Psoas muscle (tissue), 8 donors: ENCODE measurements at regions of chr3 and their contacts with region 1.

Region 1: DNA sequence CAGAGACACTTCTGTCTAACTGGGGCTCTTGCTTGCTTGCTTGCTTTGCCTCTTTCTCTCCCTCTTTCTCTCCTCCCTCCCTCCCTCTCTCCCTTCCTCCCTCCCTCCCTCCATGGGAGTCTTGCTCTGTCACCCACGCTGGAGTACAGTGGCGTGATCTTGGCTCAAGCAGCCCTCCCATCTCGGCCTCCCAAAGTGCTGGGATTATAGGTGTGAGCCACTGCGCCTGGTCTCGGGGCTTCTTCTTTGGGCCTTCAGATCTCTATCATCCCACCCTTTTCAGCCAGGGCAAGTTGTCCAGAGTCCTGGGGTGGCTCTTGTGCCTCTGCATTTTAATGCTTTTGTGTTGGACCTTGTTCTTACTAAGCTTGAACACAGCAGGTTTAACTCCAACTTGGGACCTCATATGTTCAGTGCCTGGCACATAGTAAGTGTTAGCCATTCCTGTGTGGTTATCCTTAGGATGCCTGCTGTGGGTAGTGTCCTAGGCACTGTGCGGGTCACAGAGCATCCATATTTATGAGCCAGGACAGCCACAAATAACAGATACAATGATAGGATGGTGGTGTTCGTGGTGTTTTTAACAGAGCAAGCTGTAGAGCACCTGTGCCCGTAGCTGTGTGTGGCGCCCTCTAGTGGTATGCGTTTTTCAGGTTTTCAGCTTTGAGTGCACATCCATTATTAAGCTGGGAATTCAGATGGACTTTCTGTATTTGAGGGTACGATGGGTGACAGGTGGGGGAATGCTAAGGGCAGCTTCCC is 75.1 kb downstream of the CCK start:
- DNase-seq: peak in 1 of 2 donors; percentile 42
- ATAC-seq: peak; percentile 67 to 85 (median 74)
- H3K4me3 ChIP-seq: no peak overlapping the region
- H3K27ac ChIP-seq: no peak overlapping the region
- H3K4me1 ChIP-seq: peaks cover 14% of the 10 kb centered on the region
- H3K27me3 ChIP-seq: no peaks in the 10 kb centered on the region
- CTCF ChIP-seq: peak; percentile 86

Region 2: GRCh38 chr3:41893977-41894376 is 296.9 kb before region 1 on chr3:
- intact Hi-C with region 1: loop called in 1 of 2 experiments (anchors 10 kb)
- DNase-seq: no peak
- ATAC-seq: peak in 1 of 4 donors; percentile 59
- H3K4me3 ChIP-seq: no peak overlapping the region
- H3K27ac ChIP-seq: no peak overlapping the region
- H3K4me1 ChIP-seq: no peaks in the 10 kb centered on the region
- H3K27me3 ChIP-seq: no peaks in the 10 kb centered on the region
- CTCF ChIP-seq: peak; percentile 60

Region 3: DNA sequence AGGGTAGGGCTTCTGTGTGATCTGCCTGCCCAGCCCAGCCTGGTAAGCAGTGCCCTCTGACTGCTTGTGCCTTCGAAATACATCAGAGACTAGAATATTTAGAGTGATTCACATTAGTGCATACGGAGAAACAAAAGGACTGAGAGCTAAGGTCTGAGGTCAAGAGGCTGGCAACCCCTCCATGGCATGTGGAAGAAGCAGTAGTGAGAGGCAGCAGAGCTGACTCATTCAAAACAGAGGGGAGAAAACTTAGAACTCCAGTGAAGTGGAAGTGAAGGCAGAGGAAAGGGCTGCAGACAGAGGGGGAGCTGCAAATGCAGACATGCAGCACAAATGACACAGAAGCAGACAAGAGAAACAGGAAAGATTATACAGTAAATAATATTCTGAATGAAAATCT is 290.6 kb before region 1 on chr3:
- intact Hi-C with region 1: loop called (anchors 5 to 10 kb)
- DNase-seq: no peak
- ATAC-seq: no peak
- H3K4me3 ChIP-seq: no peak overlapping the region
- H3K27ac ChIP-seq: no peak overlapping the region
- H3K4me1 ChIP-seq: no peaks in the 10 kb centered on the region
- H3K27me3 ChIP-seq: no peaks in the 10 kb centered on the region
- CTCF ChIP-seq: no peak

Region 4: GRCh38 chr3:42024591-42025351 is 166.1 kb before region 1 on chr3:
- intact Hi-C with region 1: loop called (anchors 5 to 10 kb)
- DNase-seq: no peak
- ATAC-seq: peak in 2 of 4 donors; percentile 31 to 37
- H3K4me3 ChIP-seq: peak overlapping the region; percentile 31
- H3K27ac ChIP-seq: peak overlapping the region; percentile 85
- H3K4me1 ChIP-seq: peaks cover 76% of the 10 kb centered on the region
- H3K27me3 ChIP-seq: no peaks in the 10 kb centered on the region
- CTCF ChIP-seq: no peak

Region 5: GRCh38 chr3:42118762-42119361 is 72.0 kb before region 1 on chr3:
- intact Hi-C with region 1: loop called (anchors 2 kb)
- DNase-seq: peak in 1 of 2 donors; percentile 72
- ATAC-seq: peak; percentile 60 to 73 (median 64)
- H3K4me3 ChIP-seq: no peak overlapping the region
- H3K27ac ChIP-seq: peak overlapping the region; percentile 48
- H3K4me1 ChIP-seq: peaks cover 77% of the 10 kb centered on the region
- H3K27me3 ChIP-seq: no peaks in the 10 kb centered on the region
- CTCF ChIP-seq: peak; percentile 53

Region 6: DNA sequence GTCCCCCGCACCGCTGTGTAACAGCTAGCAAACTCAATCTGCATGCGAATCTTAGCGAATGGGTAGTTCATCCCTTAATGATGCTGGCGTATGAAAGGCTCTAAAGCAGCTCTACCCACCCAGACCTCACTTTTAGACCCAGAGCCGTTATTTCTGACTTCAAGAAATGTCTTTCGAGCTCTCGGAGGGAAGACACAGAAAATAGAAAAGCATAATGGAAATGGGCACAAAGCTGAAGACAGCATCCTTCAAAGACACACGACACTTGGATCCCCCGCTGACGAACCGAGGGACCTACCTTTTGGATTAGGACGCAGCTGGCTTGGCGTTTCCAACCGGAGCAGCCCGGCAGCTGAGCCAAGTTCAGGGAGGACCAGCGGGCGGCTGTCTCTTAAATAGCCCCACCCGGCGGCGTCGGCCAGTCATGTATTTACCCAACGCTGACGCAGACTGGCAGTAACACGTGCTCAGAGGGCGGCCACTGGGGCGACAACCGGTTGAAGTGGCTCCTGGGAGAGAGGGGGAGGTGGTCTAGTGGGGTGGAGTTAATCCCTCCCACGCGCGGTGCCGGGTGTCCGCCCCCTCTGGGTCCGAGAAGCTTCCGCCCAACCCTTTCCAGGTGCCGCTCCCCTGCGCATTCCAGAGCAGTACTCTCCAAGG is 73.6 kb after region 1 on chr3:
- intact Hi-C with region 1: no loop called
- DNase-seq: peak; percentile 40 to 73
- ATAC-seq: peak; percentile 27 to 77 (median 63)
- H3K4me3 ChIP-seq: peak overlapping the region; percentile 42
- H3K27ac ChIP-seq: no peak overlapping the region
- H3K4me1 ChIP-seq: peaks cover 5% of the 10 kb centered on the region
- H3K27me3 ChIP-seq: peaks cover 9 to 76% (median 17%) of the 10 kb centered on the region in 3 donors
- CTCF ChIP-seq: no peak